PC-9 (cell line): ENCODE measurements at regions of chr5 and their contacts with region 1.

Region 1: DNA sequence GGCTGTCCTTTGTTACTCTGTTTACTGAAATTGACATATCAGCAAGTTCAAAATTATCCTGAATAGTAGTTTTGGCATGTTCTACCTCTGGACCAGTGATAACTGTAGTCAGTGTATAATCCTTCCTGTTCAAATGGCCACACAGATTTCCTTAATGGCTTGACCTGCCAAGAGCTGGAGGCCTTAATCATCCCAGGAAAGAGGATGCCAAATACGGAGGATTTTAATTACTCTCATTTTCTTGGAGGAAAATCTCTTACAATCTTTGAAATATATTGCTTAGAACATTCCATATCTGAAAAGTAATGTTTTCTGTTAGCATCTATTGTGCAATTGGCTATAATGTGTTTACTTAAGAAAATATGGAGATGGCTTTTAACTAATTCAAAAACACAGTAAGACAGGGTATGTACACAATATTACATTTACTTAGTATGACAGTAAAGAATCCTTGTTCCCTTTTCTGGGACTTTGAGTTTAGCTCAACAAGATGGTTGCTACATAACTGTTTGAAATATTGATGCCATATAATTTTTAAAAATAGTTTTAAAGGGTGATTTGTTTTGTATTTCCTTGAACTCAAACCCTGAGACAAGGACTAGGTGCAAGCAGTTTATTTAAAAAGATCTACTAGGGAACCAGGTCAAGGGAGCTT is 68.9 kb upstream of the SELENOP start:
- DNase-seq: no peak
- H3K4me3 ChIP-seq: no peak overlapping the region
- H3K27ac ChIP-seq: no peak overlapping the region
- H3K4me1 ChIP-seq: no peaks in the 10 kb centered on the region
- H3K27me3 ChIP-seq: no peaks in the 10 kb centered on the region
- CTCF ChIP-seq: no peak

Region 2: GRCh38 chr5:42745426-42745825 is 135.2 kb before region 1 on chr5:
- CTCF ChIA-PET with region 1: no interaction called
- POLR2A ChIA-PET with region 1: no interaction called
- intact Hi-C with region 1: loop called (anchors 1 kb)
- DNase-seq: peak in 1 of 2 experiments; percentile 14
- H3K4me3 ChIP-seq: no peak overlapping the region
- H3K27ac ChIP-seq: no peak overlapping the region
- H3K4me1 ChIP-seq: no peaks in the 10 kb centered on the region
- H3K27me3 ChIP-seq: no peaks in the 10 kb centered on the region
- CTCF ChIP-seq: peak; percentile 69

Region 3: DNA sequence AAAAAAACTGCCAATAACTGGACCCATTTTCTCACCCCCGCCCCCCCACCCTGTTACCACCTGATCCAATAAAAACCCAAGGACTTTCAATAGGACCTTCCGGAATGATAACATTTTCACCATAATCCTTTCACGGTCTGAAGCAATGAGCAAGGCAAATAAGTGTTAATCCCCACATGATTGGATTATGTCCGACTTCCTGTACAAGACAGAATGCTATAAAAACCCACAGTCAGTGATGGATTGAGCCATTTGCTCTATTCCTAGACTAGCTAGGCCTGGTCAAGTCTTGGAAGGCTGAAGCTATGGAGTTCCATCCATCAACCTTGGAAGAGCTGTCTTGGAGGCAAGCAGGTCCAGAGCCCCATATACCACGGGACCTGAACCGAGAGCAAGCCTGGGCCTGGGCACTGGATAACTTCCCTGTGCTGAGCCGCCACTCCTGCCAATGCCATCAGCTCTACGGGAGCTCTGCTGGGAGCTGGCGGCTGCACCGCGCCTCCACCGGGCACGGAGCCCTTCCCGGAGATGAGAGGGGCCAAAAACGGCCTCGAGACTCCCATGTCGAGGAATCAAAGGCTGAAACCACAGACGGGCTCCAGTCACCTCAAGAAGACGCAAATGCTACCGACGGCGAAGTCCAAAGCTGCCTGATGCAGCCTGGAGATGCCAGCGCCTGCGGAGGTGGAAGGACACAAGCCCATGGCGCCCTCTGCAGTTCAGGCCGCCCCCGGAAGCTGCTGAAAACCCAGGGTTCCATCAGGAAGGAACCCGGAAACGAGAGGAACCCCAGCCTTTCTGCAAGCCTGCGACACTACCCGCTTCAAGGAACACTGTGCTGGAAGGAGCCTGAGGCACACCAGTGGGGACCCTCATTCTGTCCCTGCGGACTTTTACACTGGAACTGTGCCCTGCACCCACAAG is 90.3 kb after region 1 on chr5:
- CTCF ChIA-PET with region 1: no interaction called
- POLR2A ChIA-PET with region 1: no interaction called
- intact Hi-C with region 1: no loop called
- DNase-seq: no peak
- H3K4me3 ChIP-seq: no peak overlapping the region
- H3K27ac ChIP-seq: no peak overlapping the region
- H3K4me1 ChIP-seq: no peaks in the 10 kb centered on the region
- H3K27me3 ChIP-seq: no peaks in the 10 kb centered on the region
- CTCF ChIP-seq: no peak; the same call in 1 of the 2 replicates